Mammary epithelial cell (primary cell): ENCODE measurements at regions of chr4 and their contacts with region 1.

Region 1: GRCh38 chr4:163544407-163545038 is 50.0 kb downstream of the TMA16 start:
- DNase-seq: no peak
- H3K4me3 ChIP-seq: peak overlapping the region in 2 of 3 experiments; percentile 15 to 45
- H3K27ac ChIP-seq: no peak overlapping the region
- H3K4me1 ChIP-seq: peaks cover 27% of the 10 kb centered on the region
- H3K27me3 ChIP-seq: no peaks in the 10 kb centered on the region
- CTCF ChIP-seq: peak; percentile 95 to 96

Region 2: DNA sequence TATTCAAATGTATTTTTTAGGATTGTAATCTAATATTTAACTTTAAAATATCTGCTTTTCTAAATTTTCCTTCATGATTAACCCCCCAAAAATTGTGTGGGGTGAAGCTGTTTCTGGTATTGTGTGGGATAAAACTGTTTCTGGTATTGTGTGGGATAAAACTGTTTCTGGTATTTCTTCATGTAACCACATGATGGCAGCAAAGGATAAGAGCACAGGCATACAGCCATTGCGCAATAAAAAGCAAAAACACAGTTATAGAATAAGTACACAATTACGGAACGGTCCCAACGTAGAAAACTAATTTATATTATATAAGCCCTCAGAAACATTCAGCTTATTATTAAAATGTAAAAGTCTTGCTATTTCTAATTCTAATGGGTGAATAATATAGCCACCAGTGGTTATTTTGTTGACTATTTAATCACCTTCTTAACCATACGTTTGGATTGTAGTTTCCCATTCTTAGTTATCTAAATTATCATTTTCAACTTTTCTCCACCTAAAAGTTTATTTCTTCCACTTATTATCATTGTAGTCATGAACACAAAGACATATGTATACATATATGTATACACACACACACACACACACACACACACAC is 1046.9 kb before region 1 on chr4:
- CTCF ChIA-PET with region 1: interaction called, 4 read pairs
- dilution Hi-C with region 1: no loop called
- in situ Hi-C with region 1: no loop called
- intact Hi-C with region 1: loop called (anchors 1 kb)
- DNase-seq: peak; percentile 25
- H3K4me3 ChIP-seq: no peak overlapping the region
- H3K27ac ChIP-seq: no peak overlapping the region
- H3K4me1 ChIP-seq: no peaks in the 10 kb centered on the region
- H3K27me3 ChIP-seq: no peaks in the 10 kb centered on the region
- CTCF ChIP-seq: peak; percentile 46 to 82

Region 3: DNA sequence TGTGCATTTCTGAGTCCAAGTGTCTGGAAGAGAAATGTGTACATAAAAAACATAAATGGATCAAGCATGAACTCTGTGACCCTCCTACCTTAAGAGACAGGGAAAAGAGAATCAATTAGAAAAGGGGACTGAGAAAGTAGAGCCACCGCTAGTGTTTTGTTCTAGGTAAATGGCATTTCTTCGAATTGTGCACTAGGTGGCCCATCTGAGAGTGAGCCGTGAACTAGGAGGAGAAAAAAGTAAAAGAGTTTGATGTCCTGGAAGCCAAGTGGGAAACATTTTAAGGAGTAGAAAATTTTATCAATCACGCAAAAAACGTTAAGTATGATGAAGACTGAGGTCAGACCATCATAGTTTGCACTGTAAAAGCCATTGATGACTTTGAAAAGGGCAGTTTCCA is 432.9 kb before region 1 on chr4:
- CTCF ChIA-PET with region 1: interaction called, 23 read pairs
- dilution Hi-C with region 1: no loop called
- in situ Hi-C with region 1: no loop called
- intact Hi-C with region 1: no loop called
- DNase-seq: no peak
- H3K4me3 ChIP-seq: no peak overlapping the region
- H3K27ac ChIP-seq: no peak overlapping the region
- H3K4me1 ChIP-seq: no peaks in the 10 kb centered on the region
- H3K27me3 ChIP-seq: no peaks in the 10 kb centered on the region
- CTCF ChIP-seq: peak in 1 of 2 donors; percentile 21

Region 4: GRCh38 chr4:163332500-163333406 is 211.8 kb before region 1 on chr4 and contains the start of gene NPY1R:
- CTCF ChIA-PET with region 1: no interaction called
- dilution Hi-C with region 1: no loop called
- in situ Hi-C with region 1: no loop called
- intact Hi-C with region 1: loop called (anchors 2 kb)
- DNase-seq: peak; percentile 73
- H3K4me3 ChIP-seq: peak within 1 kb of the TSS; percentile 52 to 63 (median 59)
- H3K27ac ChIP-seq: no peak within 1 kb of the TSS
- H3K4me1 ChIP-seq: peaks cover 12% of the 10 kb centered on the region
- H3K27me3 ChIP-seq: peaks cover 12% of the 10 kb centered on the region
- CTCF ChIP-seq: peak; percentile 56 to 86
- total RNA-seq, gene NPY1R: 0.67 TPM in 1 of 2 donors, not detected in the other

Region 5: GRCh38 chr4:163395758-163396157 is 148.8 kb before region 1 on chr4:
- CTCF ChIA-PET with region 1: no interaction called
- dilution Hi-C with region 1: no loop called
- in situ Hi-C with region 1: no loop called
- intact Hi-C with region 1: no loop called
- DNase-seq: peak; percentile 5
- H3K4me3 ChIP-seq: peak overlapping the region; percentile 34 to 63 (median 46)
- H3K27ac ChIP-seq: no peak overlapping the region
- H3K4me1 ChIP-seq: peaks cover 6% of the 10 kb centered on the region
- H3K27me3 ChIP-seq: no peaks in the 10 kb centered on the region
- CTCF ChIP-seq: no peak

Region 6: GRCh38 chr4:163494360-163495162 is 50.0 kb before region 1 on chr4 and contains the start of gene TMA16:
- CTCF ChIA-PET with region 1: interaction called, 3 read pairs
- dilution Hi-C with region 1: no loop called
- in situ Hi-C with region 1: loop called in 1 of 2 experiments (anchors 10 kb)
- intact Hi-C with region 1: loop called (anchors 2 kb)
- DNase-seq: peak; percentile 95
- H3K4me3 ChIP-seq: peak within 1 kb of the TSS; percentile 57 to 91 (median 76)
- H3K27ac ChIP-seq: peak within 1 kb of the TSS; percentile 87
- H3K4me1 ChIP-seq: peaks cover 12% of the 10 kb centered on the region
- H3K27me3 ChIP-seq: no peaks in the 10 kb centered on the region
- CTCF ChIP-seq: no peak
- total RNA-seq, gene TMA16: 24.0 to 43.9 TPM